Activated CD4-positive, alpha-beta memory T cell treated with anti-CD3 and anti-CD28 coated beads, Interleukin-2, amount 10 ng/mL, durations not matched to agents 7 days and 5 days (primary cell): ENCODE measurements at regions of chr12 and their contacts with region 1.

Region 1: GRCh38 chr12:54191550-54192022 is 2.8 kb upstream of the SMUG1 start:
- DNase-seq: peak; percentile 81
- H3K4me3 Mint-ChIP-seq: no peak overlapping the region
- H3K27ac Mint-ChIP-seq: no peak overlapping the region
- H3K4me1 Mint-ChIP-seq: peaks cover 24% of the 10 kb centered on the region
- H3K27me3 Mint-ChIP-seq: peaks cover 49% of the 10 kb centered on the region

Region 2: DNA sequence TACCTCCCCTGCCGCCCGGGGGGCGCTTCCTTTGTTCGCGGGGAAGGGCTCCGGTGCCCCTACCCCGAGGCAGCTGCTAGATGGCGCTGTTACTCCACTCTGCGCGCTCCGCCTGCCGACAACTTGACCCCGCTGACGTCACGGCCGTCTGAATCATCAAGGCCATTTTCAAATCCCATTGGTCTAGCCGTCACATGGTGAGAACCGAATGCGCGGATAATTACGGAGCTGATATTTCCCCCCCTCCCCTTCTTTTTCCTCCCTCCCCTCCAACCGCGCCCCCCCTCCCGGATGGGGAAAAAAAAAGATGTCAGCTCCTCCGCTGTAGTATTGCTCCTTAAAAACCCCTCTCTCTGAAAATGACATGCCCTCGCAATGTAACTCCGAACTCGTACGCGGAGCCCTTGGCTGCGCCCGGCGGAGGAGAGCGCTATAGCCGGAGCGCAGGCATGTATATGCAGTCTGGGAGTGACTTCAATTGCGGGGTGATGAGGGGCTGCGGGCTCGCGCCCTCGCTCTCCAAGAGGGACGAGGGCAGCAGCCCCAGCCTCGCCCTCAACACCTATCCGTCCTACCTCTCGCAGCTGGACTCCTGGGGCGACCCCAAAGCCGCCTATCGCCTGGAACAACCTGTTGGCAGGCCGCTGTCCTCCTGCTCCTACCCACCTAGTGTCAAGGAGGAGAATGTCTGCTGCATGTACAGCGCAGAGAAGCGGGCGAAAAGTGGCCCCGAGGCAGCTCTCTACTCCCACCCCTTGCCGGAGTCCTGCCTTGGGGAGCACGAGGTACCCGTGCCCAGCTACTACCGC is 206.5 kb before region 1 on chr12 and contains the start of gene HOXC10:
- CTCF ChIA-PET with region 1: interaction called, 25 read pairs
- POLR2A ChIA-PET with region 1: no interaction called
- DNase-seq: peak; percentile 88
- H3K4me3 Mint-ChIP-seq: peak within 1 kb of the TSS; percentile 48
- H3K27ac Mint-ChIP-seq: peak within 1 kb of the TSS; percentile 47
- H3K4me1 Mint-ChIP-seq: peaks cover 31% of the 10 kb centered on the region
- H3K27me3 Mint-ChIP-seq: peaks cover 94% of the 10 kb centered on the region
- total RNA-seq, gene HOXC10: not detected

Region 3: GRCh38 chr12:54005853-54006686 is 185.5 kb before region 1 on chr12:
- CTCF ChIA-PET with region 1: interaction called, 74 read pairs
- POLR2A ChIA-PET with region 1: interaction called, 4 read pairs
- DNase-seq: peak; percentile 85
- H3K4me3 Mint-ChIP-seq: peak overlapping the region; percentile 66
- H3K27ac Mint-ChIP-seq: no peak overlapping the region
- H3K4me1 Mint-ChIP-seq: peaks cover 25% of the 10 kb centered on the region
- H3K27me3 Mint-ChIP-seq: peaks cover 95% of the 10 kb centered on the region

Region 4: GRCh38 chr12:54017878-54018467 is 173.6 kb before region 1 on chr12:
- CTCF ChIA-PET with region 1: interaction called, 13 read pairs
- POLR2A ChIA-PET with region 1: interaction called, 3 read pairs
- DNase-seq: peak; percentile 74
- H3K4me3 Mint-ChIP-seq: peak overlapping the region; percentile 73
- H3K27ac Mint-ChIP-seq: no peak overlapping the region
- H3K4me1 Mint-ChIP-seq: peaks cover 23% of the 10 kb centered on the region
- H3K27me3 Mint-ChIP-seq: peaks cover 71% of the 10 kb centered on the region

Region 5: DNA sequence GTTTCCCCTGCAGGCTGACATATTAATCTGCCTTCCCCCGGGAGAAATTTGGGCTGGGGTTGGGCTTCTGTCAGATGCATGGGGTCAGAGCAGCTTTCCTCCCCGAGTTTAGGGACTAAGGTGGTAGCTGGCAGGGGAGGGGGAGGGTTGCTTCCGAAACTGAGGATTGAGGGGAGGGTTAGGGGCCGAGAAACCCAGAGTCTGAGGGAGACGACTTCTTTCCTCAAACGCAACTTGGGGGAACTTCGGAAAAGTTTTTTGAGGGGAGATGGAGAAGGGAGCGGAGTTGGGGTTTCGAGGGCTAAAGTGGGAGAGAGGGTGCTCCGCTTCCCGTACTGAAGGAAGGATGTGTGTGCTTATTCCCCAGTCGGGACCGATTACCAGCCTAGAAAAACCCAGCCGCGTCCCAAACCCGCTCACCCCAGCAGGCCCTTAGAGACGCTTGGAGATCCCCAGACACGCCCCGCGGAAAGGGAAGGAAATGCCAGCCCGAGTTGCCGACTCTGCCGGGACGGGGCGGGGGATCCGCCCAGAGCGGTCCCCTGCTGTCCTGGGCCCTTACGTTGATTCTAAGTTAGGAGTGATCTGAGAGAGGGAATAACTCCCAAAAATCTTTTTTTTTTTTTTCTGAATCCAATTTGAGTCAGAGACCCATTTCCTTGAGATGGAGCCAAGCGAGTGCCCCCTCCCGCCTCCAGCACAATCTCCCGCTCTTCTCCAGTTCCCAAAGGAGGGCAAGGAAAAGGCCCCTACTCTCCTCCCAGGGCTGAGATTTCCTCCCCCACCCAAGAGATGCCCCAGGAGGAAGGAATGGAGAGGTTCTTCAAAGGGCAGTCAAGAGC is 64.7 kb before region 1 on chr12:
- CTCF ChIA-PET with region 1: no interaction called
- POLR2A ChIA-PET with region 1: no interaction called
- DNase-seq: no peak
- H3K4me3 Mint-ChIP-seq: no peak overlapping the region
- H3K27ac Mint-ChIP-seq: no peak overlapping the region
- H3K4me1 Mint-ChIP-seq: peaks cover 5% of the 10 kb centered on the region
- H3K27me3 Mint-ChIP-seq: peaks cover 84% of the 10 kb centered on the region

Region 6: GRCh38 chr12:54173066-54173726 is 18.4 kb before region 1 on chr12:
- CTCF ChIA-PET with region 1: interaction called, 28 read pairs
- POLR2A ChIA-PET with region 1: interaction called, 3 read pairs
- DNase-seq: peak; percentile 34
- H3K4me3 Mint-ChIP-seq: no peak overlapping the region
- H3K27ac Mint-ChIP-seq: no peak overlapping the region
- H3K4me1 Mint-ChIP-seq: peaks cover 7% of the 10 kb centered on the region
- H3K27me3 Mint-ChIP-seq: peaks cover 2% of the 10 kb centered on the region